Naive thymus-derived CD8-positive, alpha-beta T cell (primary cell): ENCODE measurements at regions of chr20 and their contacts with region 1.

Region 1: GRCh38 chr20:36605399-36606157 is at the start of gene RAB5IF:
- DNase-seq: peak; percentile 97 to 99 (median 99)
- ATAC-seq: peak; percentile 90 to 92
- H3K4me3 Mint-ChIP-seq: peak within 1 kb of the TSS; percentile 92 to 98 (median 96)
- H3K27ac Mint-ChIP-seq: peak within 1 kb of the TSS; percentile 92 to 99 (median 96)
- H3K4me1 Mint-ChIP-seq: peaks cover 15 to 45% (median 26%) of the 10 kb centered on the region in 4 donors
- H3K27me3 Mint-ChIP-seq: no peaks in the 10 kb centered on the region
- polyA plus RNA-seq, gene RAB5IF: 113 to 141 (median 138) TPM

Region 2: GRCh38 chr20:36573103-36573794 is 32.3 kb before region 1 on chr20 and contains the start of gene TGIF2:
- POLR2A ChIA-PET with region 1: interaction called, 448 read pairs
- DNase-seq: peak; percentile 86 to 96 (median 95)
- ATAC-seq: peak; percentile 71 to 75
- H3K4me3 Mint-ChIP-seq: peak within 1 kb of the TSS; percentile 85 to 98 (median 95)
- H3K27ac Mint-ChIP-seq: peak within 1 kb of the TSS; percentile 98 to 100 (median 99)
- H3K4me1 Mint-ChIP-seq: peaks cover 25 to 54% (median 39%) of the 10 kb centered on the region in 4 donors
- H3K27me3 Mint-ChIP-seq: no peaks in the 10 kb centered on the region
- polyA plus RNA-seq, gene TGIF2: 25.7 to 36.8 (median 30.8) TPM

Region 3: GRCh38 chr20:36591854-36592641 is 13.5 kb before region 1 on chr20:
- POLR2A ChIA-PET with region 1: interaction called, 68 read pairs
- DNase-seq: peak in 8 of 10 donors; percentile 32 to 73 (median 50)
- ATAC-seq: peak; percentile 50 to 52
- H3K4me3 Mint-ChIP-seq: peak overlapping the region in 8 of 10 donors; percentile 10 to 58 (median 24)
- H3K27ac Mint-ChIP-seq: peak overlapping the region; percentile 67 to 94 (median 90)
- H3K4me1 Mint-ChIP-seq: peaks cover 21 to 63% (median 48%) of the 10 kb centered on the region in 4 donors
- H3K27me3 Mint-ChIP-seq: no peaks in the 10 kb centered on the region

Region 4: DNA sequence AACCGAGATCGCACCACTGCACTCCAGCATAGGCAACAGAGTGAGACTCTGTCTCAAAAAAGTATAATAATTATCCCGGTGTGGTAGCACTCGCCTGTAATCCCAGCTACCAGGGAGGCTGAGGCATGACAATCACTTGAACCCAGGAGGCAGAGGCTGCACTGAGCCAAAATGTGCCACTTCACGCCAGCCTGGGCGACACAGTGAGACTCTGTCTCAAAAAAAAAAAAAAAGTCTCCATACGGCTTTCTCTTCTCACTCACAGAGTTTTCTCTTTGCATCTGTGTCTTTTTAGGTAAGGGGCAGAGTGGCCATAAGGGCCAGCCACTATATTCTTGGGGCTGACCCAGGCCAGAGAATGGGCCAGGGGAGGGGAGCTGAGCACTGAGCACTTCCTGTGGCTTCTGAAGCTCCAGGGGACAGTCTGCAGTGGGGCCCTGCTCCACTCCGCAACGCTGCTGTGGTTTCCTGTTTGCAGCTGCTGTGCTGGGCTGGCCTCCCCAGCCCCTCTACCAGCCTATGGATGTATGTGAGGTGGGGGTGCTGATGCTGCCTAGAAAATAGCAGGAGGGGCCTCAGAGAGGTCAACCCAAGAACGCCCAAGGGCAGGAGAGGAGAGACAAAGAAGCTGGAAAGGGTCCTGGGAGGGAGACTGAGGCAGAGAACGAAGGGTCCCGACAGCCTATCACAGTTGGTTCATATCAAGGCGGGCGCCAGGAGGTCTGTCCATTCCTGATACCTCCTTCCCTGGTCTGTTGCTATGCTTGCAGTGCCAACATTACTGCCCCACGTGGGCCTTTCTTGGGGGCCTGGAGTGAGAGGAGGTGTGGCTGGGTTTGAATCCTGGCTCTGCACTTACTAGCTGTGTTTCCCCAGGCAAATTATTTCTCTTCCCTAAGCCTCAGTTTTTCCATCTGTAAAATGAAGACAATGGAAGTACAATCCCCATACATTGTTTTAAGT is 24.4 kb after region 1 on chr20:
- POLR2A ChIA-PET with region 1: interaction called, 12 read pairs
- DNase-seq: peak in 9 of 10 donors; percentile 14 to 57 (median 40)
- ATAC-seq: peak; percentile 94 to 96
- H3K4me3 Mint-ChIP-seq: peak overlapping the region; percentile 60 to 91 (median 86)
- H3K27ac Mint-ChIP-seq: peak overlapping the region; percentile 93 to 99 (median 97)
- H3K4me1 Mint-ChIP-seq: peaks cover 25 to 71% (median 63%) of the 10 kb centered on the region in 4 donors
- H3K27me3 Mint-ChIP-seq: no peaks in the 10 kb centered on the region

Region 5: GRCh38 chr20:36745927-36746659 is 140.5 kb after region 1 on chr20 and contains the start of gene NDRG3:
- POLR2A ChIA-PET with region 1: interaction called, 11 read pairs
- DNase-seq: peak; percentile 81 to 96 (median 91)
- ATAC-seq: peak; percentile 96 to 97
- H3K4me3 Mint-ChIP-seq: peak within 1 kb of the TSS; percentile 84 to 92 (median 90)
- H3K27ac Mint-ChIP-seq: peak within 1 kb of the TSS; percentile 71 to 97 (median 96)
- H3K4me1 Mint-ChIP-seq: peaks cover 10 to 34% (median 27%) of the 10 kb centered on the region in 4 donors
- H3K27me3 Mint-ChIP-seq: no peaks in the 10 kb centered on the region
- polyA plus RNA-seq, gene NDRG3: 40.0 to 44.5 (median 40.3) TPM